ENCODE measurements at regions of chr15 and their contacts with region 1.

Region 1: DNA sequence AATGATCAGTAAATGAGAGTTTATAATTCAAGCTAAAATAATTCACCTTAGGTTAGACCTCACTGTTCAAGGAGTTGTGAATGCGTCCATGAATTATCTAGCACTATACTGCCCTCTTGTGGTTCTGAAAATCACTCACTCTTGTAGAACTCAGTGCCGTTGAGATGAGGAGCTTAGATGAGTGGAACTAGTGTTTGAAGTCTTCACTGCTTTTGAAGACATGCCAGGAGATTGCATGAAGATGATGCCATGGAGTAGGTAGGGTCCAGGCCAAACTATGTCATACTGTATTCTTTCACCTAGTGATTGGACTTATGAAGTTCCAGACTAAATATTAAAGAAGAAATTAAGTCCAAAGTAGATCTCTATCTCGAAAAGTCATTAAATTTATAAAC is 28.8 kb downstream of the LYSMD4 start:
- DNase-seq: no peak
- ATAC-seq: peak; percentile 69
- H3K4me3 Mint-ChIP-seq: no peak overlapping the region
- H3K27ac Mint-ChIP-seq: no peak overlapping the region
- H3K4me1 Mint-ChIP-seq: peaks cover 48% of the 10 kb centered on the region
- H3K27me3 Mint-ChIP-seq: no peaks in the 10 kb centered on the region

Region 2: DNA sequence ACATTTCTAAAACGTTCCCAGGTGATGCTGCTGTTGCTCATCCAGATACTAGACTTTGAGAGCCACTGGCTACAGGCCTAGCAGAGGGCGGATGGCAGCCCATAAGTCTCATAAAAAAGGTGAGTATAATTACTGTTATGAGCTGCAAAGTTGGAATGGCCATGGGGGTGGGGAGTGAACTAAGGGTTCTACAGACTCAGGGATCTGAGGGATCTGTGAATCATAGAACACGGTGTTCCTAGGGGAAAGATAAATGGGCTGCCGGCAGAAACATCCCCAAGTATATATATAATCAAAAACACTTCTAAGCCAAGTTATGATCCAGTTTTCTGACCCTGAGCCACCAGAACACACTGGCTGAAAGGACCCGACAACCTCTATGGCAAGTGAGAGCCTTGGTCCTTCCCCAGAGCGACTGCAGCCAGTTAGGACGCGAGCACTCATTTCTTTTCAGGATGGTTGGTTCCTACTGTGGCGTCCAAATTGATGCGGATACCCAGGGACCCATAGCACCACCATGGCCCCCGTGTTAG is 607.5 kb before region 1 on chr15:
- CTCF ChIA-PET with region 1: no interaction called
- POLR2A ChIA-PET with region 1: no interaction called
- intact Hi-C with region 1: no loop called
- DNase-seq: no peak
- ATAC-seq: no peak
- H3K4me3 Mint-ChIP-seq: no peak overlapping the region
- H3K27ac Mint-ChIP-seq: no peak overlapping the region
- H3K4me1 Mint-ChIP-seq: no peaks in the 10 kb centered on the region
- H3K27me3 Mint-ChIP-seq: peaks cover 23% of the 10 kb centered on the region

Region 3: DNA sequence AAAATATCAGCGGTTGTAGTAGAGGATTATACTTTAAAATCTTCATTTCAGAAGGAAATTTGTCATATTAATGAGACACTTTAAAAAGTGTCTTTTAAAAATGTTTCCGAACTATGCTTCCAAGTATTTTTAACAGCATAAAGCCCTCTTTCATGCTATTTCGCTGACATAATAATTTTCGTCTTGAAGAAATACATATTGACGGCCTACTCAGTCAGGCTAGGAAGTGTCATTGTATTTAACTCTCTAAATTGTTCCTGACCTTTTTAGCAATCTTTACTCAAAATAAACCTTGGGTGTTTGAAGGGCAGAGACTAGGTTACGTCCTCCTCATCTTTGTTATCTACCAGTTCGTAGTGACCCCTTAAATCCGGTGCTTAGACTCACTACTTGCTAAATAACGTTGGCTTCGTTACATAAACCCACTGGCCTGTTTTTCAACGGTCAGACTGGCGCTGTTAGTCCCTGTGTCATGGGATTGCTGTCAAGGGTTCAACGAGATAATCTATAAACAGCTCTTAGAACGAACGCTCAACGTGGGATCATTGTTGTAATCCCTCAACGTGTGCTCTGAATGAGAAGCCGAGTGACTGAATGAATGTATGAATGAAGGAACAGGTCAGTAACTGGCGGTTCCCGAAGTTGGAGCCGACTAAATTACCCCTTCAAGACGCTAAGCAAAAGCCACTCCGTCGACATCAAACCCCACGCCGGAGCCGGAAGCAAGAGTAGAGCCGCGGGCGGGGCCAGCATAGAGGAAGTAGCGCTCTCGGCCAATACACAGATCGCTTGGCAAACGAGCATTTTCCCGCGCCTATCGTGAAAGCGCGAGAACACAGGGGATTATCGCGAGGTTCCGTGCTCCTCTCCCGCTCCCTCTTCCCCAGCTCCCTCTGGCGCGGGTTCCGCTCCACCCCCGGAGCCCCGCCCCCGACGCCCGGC is 453.7 kb before region 1 on chr15:
- CTCF ChIA-PET with region 1: interaction called, 19 read pairs
- POLR2A ChIA-PET with region 1: interaction called, 3 read pairs
- intact Hi-C with region 1: loop called in 1 of 2 experiments (anchors 1 kb)
- DNase-seq: peak; percentile 98
- ATAC-seq: peak; percentile 99
- H3K4me3 Mint-ChIP-seq: no peak overlapping the region
- H3K27ac Mint-ChIP-seq: peak overlapping the region; percentile 95
- H3K4me1 Mint-ChIP-seq: peaks cover 22% of the 10 kb centered on the region
- H3K27me3 Mint-ChIP-seq: no peaks in the 10 kb centered on the region

Region 4: DNA sequence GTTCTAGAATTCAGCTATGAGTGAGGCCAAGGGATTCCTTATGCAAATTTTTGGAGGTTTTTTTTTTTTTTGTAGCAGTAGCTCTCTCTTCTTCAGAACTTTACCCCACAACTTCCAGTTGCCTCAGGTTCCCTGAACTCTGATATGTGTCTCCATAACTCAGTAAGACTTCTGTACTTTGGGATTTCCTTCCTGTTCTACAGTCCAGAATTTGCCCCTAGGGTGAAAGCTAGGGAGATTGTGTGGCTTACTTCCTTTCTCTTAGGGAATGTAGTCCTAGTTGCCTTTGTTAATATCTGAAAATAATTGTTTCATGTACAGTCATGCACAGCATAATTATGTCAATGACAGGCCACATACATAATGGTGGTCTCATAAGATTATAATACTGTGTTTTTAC is 422.3 kb before region 1 on chr15:
- CTCF ChIA-PET with region 1: interaction called, 124 read pairs
- POLR2A ChIA-PET with region 1: interaction called, 5 read pairs
- intact Hi-C with region 1: loop called (anchors 1 kb)
- DNase-seq: no peak
- ATAC-seq: no peak
- H3K4me3 Mint-ChIP-seq: no peak overlapping the region
- H3K27ac Mint-ChIP-seq: no peak overlapping the region
- H3K4me1 Mint-ChIP-seq: peaks cover 44% of the 10 kb centered on the region
- H3K27me3 Mint-ChIP-seq: no peaks in the 10 kb centered on the region

Region 5: GRCh38 chr15:99424978-99425656 is 279.3 kb before region 1 on chr15:
- CTCF ChIA-PET with region 1: interaction called, 5 read pairs
- POLR2A ChIA-PET with region 1: no interaction called
- intact Hi-C with region 1: loop called (anchors 2 to 10 kb)
- DNase-seq: peak; percentile 79
- ATAC-seq: peak; percentile 99
- H3K4me3 Mint-ChIP-seq: peak overlapping the region; percentile 35
- H3K27ac Mint-ChIP-seq: peak overlapping the region; percentile 90
- H3K4me1 Mint-ChIP-seq: peaks cover 62% of the 10 kb centered on the region
- H3K27me3 Mint-ChIP-seq: peaks cover 2% of the 10 kb centered on the region

Region 6: DNA sequence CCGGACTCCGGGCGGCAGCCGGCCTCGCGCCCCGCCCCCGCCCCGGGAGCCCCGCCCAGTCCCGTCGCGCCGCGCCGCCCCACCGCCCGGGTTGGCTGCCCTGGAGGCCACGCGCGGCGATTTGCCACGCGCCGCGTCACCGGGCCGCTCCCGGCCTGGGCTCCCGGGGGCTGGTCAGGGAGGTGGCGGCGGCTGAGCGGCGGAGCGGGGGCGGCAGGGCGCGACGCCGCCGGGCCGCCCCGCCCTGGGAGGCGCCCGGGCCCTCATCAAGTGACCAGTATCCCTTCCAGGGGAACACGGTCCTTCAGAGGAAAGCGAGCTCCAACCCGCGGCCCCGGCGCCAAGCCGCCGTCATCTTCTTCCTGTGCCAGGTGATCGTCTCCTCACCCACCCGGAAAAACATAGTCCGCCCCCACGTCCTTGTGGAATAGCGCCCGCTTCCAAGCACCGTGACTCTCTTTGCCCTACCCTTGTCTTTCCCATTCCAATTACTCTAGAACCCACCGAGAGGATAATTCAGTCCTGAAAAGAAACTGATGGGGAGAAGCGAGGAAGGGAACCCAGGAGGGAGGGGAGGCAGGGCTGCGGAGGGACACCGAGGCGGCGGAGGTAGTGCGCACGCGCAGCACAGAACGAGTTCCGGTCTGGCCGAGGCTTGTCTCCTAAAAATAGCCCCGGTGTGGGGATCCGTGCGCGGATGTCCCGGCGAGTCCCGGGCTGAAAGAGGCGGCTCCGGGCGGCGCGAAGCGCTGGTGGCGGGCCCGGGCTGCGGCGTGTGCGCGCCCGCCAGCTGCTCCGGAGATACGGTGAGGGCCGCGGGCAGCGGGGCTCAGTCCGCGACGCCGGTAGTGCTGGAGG is 138.9 kb before region 1 on chr15 and contains the start of gene MEF2A:
- CTCF ChIA-PET with region 1: interaction called, 11 read pairs
- POLR2A ChIA-PET with region 1: no interaction called
- intact Hi-C with region 1: loop called (anchors 2 to 5 kb)
- DNase-seq: peak; percentile 95
- ATAC-seq: peak; percentile 84
- H3K4me3 Mint-ChIP-seq: peak within 1 kb of the TSS; percentile 98
- H3K27ac Mint-ChIP-seq: peak within 1 kb of the TSS; percentile 96
- H3K4me1 Mint-ChIP-seq: peaks cover 21% of the 10 kb centered on the region
- H3K27me3 Mint-ChIP-seq: no peaks in the 10 kb centered on the region
- total RNA-seq, gene MEF2A: 16.5 to 20.9 TPM

Region 7: DNA sequence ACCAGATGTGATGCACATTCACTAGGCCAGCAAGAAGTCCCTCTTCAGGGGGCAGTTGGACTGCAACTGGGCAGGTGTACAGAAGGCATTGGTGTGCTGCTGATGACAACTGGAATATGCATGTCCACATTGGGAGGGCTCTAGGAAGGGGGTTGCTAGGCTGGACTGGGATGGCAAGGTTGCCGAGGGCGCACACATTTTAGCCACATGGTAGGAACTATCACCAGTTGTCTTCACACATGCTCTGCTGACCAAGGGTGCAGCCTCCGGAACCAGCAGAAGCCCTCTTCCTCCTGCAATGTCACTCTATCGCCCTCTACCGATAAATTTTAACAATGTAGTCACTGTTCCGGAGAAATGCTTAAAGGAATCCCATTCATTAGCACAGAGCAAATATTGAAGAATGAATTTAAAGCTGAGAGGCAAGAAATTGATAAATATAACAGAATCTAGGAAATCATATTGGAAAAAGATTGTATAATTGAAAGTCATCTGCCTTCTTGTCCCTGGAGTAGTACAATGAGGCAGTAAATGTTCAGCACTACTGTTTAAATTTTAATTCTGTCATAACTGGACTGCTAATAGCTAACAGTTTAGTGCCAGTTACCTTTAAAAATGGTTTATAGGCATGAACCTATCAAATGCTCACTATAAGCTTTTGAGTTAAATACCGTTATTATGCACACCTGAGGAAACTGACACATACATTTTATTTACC is 51.4 kb after region 1 on chr15:
- CTCF ChIA-PET with region 1: interaction called, 14 read pairs
- POLR2A ChIA-PET with region 1: no interaction called
- intact Hi-C with region 1: loop called (anchors 1 to 2 kb)
- DNase-seq: peak; percentile 51
- ATAC-seq: peak; percentile 94
- H3K4me3 Mint-ChIP-seq: no peak overlapping the region
- H3K27ac Mint-ChIP-seq: no peak overlapping the region
- H3K4me1 Mint-ChIP-seq: no peaks in the 10 kb centered on the region
- H3K27me3 Mint-ChIP-seq: no peaks in the 10 kb centered on the region

Region 8: GRCh38 chr15:100078511-100079220 is 374.2 kb after region 1 on chr15:
- CTCF ChIA-PET with region 1: no interaction called
- POLR2A ChIA-PET with region 1: no interaction called
- intact Hi-C with region 1: no loop called
- DNase-seq: no peak
- ATAC-seq: no peak
- H3K4me3 Mint-ChIP-seq: no peak overlapping the region
- H3K27ac Mint-ChIP-seq: no peak overlapping the region
- H3K4me1 Mint-ChIP-seq: no peaks in the 10 kb centered on the region
- H3K27me3 Mint-ChIP-seq: no peaks in the 10 kb centered on the region